Activated B cell treated with CpG ODN at 0.5 μM for 24 hours (primary cell): ENCODE measurements at regions of chr16 and their contacts with region 1.

Region 1: GRCh38 chr16:31458844-31459721 is at the start of gene ARMC5:
- DNase-seq: peak; percentile 93
- ATAC-seq: peak; percentile 75
- H3K4me3 Mint-ChIP-seq: peak within 1 kb of the TSS; percentile 91
- H3K27ac Mint-ChIP-seq: peak within 1 kb of the TSS; percentile 98
- H3K4me1 Mint-ChIP-seq: peaks cover 50% of the 10 kb centered on the region
- H3K27me3 Mint-ChIP-seq: no peaks in the 10 kb centered on the region
- CTCF ChIP-seq: no peak
- total RNA-seq, gene ARMC5: 10.9 TPM in 2 replicates

Region 2: GRCh38 chr16:31032736-31033708 is 426.1 kb before region 1 on chr16 and contains the start of gene STX4:
- CTCF ChIA-PET with region 1: no interaction called
- POLR2A ChIA-PET with region 1: no interaction called
- intact Hi-C with region 1: loop called (anchors 1 kb)
- DNase-seq: peak; percentile 95
- ATAC-seq: peak; percentile 78
- H3K4me3 Mint-ChIP-seq: peak within 1 kb of the TSS; percentile 97
- H3K27ac Mint-ChIP-seq: peak within 1 kb of the TSS; percentile 94
- H3K4me1 Mint-ChIP-seq: peaks cover 17% of the 10 kb centered on the region
- H3K27me3 Mint-ChIP-seq: no peaks in the 10 kb centered on the region
- CTCF ChIP-seq: no peak
- total RNA-seq, gene STX4: 106 and 107 TPM in 2 replicates

Region 3: GRCh38 chr16:31202414-31203375 is 256.4 kb before region 1 on chr16 and contains the start of gene PYCARD:
- CTCF ChIA-PET with region 1: no interaction called
- POLR2A ChIA-PET with region 1: interaction called, 19 read pairs
- intact Hi-C with region 1: no loop called
- DNase-seq: peak; percentile 61
- ATAC-seq: peak; percentile 32
- H3K4me3 Mint-ChIP-seq: peak within 1 kb of the TSS; percentile 91
- H3K27ac Mint-ChIP-seq: peak within 1 kb of the TSS; percentile 86
- H3K4me1 Mint-ChIP-seq: peaks cover 56% of the 10 kb centered on the region
- H3K27me3 Mint-ChIP-seq: no peaks in the 10 kb centered on the region
- CTCF ChIP-seq: no peak
- total RNA-seq, gene PYCARD: 21.7 and 27.8 TPM in 2 replicates

Region 4: DNA sequence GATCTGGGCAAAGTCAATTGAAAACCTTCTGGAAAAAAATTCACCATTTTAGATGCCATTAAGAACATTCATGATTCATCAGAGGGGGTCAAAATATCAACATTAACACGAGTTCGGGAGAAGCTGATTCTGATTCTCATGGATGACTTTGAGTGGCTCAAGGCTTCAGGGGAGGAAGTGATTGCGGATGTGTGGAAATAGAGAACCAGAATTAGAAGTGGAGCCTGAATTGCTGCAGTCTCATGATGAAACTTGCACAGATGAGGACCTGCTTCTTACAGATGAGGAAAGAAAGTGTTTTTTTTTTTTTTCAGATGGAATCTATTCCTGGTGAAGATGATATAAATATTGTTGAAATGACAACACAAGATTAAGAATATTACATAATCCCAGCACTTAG is 91.2 kb before region 1 on chr16:
- CTCF ChIA-PET with region 1: no interaction called
- POLR2A ChIA-PET with region 1: no interaction called
- intact Hi-C with region 1: no loop called
- DNase-seq: no peak
- ATAC-seq: no peak
- H3K4me3 Mint-ChIP-seq: no peak overlapping the region
- H3K27ac Mint-ChIP-seq: no peak overlapping the region
- H3K4me1 Mint-ChIP-seq: peaks cover 13% of the 10 kb centered on the region
- H3K27me3 Mint-ChIP-seq: peaks cover 2% of the 10 kb centered on the region
- CTCF ChIP-seq: no peak

Region 5: GRCh38 chr16:31487720-31488467 is 28.8 kb after region 1 on chr16:
- CTCF ChIA-PET with region 1: interaction called, 3 read pairs
- POLR2A ChIA-PET with region 1: interaction called, 5 read pairs
- intact Hi-C with region 1: loop called (anchors 1 kb)
- DNase-seq: peak; percentile 59
- ATAC-seq: peak; percentile 95
- H3K4me3 Mint-ChIP-seq: peak overlapping the region; percentile 86
- H3K27ac Mint-ChIP-seq: no peak overlapping the region
- H3K4me1 Mint-ChIP-seq: peaks cover 9% of the 10 kb centered on the region
- H3K27me3 Mint-ChIP-seq: peaks cover 7% of the 10 kb centered on the region
- CTCF ChIP-seq: no peak

Region 6: GRCh38 chr16:31700526-31701388 is 241.7 kb after region 1 on chr16:
- CTCF ChIA-PET with region 1: no interaction called
- POLR2A ChIA-PET with region 1: interaction called, 3 read pairs
- intact Hi-C with region 1: loop called (anchors 5 kb)
- DNase-seq: peak; percentile 73
- ATAC-seq: peak; percentile 35
- H3K4me3 Mint-ChIP-seq: peak overlapping the region; percentile 86
- H3K27ac Mint-ChIP-seq: peak overlapping the region; percentile 78
- H3K4me1 Mint-ChIP-seq: peaks cover 24% of the 10 kb centered on the region
- H3K27me3 Mint-ChIP-seq: no peaks in the 10 kb centered on the region
- CTCF ChIP-seq: no peak